ENCODE measurements at regions of chr12 and their contacts with region 1.

Region 1: DNA sequence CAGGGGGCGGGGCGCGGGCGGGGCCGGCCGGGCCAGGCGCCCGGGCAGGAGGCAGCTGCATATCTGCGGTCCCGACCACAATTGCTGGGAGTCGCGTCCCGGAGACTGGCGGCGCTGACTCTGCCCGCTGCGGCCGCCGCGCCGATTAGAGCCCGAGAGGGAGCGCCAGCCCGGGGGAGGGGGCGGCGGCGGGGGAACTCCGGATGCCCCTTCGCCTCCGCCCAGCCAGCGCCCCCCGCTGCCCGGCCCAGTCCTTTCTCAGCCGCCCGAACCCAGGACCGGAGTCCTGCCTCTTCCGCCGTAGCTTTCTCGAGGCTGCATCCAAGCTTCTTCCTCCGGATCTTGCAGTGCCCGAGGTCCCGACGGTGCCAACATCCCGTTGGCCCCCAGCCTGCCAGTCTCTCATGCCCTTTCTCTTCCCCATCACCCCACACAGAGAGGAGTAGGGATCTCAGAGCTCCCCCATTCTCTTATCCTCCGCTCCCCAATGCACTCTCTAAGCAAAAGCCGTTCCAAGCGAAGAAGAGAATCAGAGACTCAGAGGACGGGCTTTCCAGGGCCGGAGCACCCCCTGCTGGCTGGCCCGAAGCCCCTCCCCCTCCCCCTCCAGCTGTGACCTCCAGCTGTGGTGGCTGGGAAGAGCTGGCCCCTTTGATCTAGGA is 8.8 kb upstream of the SP7 start:
- DNase-seq: peak; percentile 66
- H3K4me3 Mint-ChIP-seq: peak overlapping the region; percentile 85
- H3K27ac Mint-ChIP-seq: peak overlapping the region; percentile 89
- H3K4me1 Mint-ChIP-seq: peaks cover 21% of the 10 kb centered on the region
- H3K27me3 Mint-ChIP-seq: peaks cover 8% of the 10 kb centered on the region

Region 2: GRCh38 chr12:53251477-53252348 is 93.2 kb before region 1 on chr12:
- CTCF ChIA-PET with region 1: no interaction called
- POLR2A ChIA-PET with region 1: no interaction called
- DNase-seq: peak; percentile 73
- H3K4me3 Mint-ChIP-seq: peak overlapping the region; percentile 99
- H3K27ac Mint-ChIP-seq: peak overlapping the region; percentile 94
- H3K4me1 Mint-ChIP-seq: peaks cover 47% of the 10 kb centered on the region
- H3K27me3 Mint-ChIP-seq: no peaks in the 10 kb centered on the region

Region 3: DNA sequence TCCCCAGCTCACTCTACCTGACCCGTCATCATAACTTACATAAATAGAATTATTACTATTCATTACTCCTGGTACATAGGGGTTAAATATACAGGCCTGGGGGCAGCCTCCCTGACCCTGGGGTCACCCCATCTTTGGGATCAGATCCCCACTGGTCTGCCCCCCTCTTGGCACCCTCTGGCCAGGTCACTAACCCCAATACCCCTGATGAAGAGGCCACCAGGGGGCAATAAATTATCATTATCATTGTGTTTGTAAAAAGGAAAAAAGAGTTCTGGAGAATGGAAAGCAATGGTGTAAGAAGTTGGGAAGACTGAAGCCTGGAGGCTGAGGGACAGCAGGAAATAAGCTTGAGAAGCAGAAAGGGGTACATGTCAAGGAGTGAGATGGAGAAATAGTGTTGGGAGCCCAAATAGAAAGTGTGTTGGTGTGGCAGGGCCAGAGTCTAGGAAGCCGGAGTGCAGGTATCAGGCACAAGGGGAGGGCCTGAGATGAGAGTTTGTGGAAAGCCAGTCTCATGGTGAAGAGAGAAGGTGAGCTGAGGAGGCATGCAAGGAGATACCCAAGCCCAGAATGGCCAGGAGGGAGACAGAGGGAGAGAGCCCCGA is 17.4 kb before region 1 on chr12:
- CTCF ChIA-PET with region 1: interaction called, 48 read pairs
- POLR2A ChIA-PET with region 1: no interaction called
- DNase-seq: no peak
- H3K4me3 Mint-ChIP-seq: no peak overlapping the region
- H3K27ac Mint-ChIP-seq: no peak overlapping the region
- H3K4me1 Mint-ChIP-seq: peaks cover 27% of the 10 kb centered on the region
- H3K27me3 Mint-ChIP-seq: peaks cover 24% of the 10 kb centered on the region

Region 4: DNA sequence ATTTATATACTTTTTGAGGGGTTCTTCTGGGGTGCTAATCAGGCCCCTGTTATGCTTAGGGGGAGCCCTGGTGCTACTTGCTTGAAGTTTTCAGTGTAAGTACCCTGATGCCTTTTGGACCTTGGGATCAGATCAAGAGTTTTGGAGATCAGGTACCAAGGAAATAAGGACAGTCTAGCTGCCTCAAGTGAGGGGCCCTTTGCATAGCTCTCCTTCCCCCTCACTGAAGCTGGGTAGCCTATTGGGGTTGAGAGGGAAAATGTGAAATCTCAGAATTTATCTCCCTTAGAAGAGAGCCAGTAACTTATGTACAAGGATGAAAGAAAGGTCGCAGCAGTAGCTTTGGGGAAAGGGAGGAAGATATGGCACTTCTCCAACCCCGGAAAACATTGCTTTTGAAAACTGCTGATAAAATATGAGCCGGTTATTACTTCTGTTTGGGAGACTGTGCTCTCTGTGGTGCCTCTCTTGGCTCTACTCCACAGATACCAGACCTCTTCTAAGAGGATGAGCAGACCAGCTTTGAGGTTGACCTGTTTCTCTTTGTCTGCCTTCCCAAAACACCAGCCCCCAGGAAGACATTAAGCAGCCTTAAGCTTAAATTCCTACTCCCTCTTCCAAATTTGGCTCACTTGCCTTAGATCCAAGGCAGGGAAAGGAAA is 69.9 kb after region 1 on chr12:
- CTCF ChIA-PET with region 1: interaction called, 17 read pairs
- POLR2A ChIA-PET with region 1: no interaction called
- DNase-seq: no peak
- H3K4me3 Mint-ChIP-seq: no peak overlapping the region
- H3K27ac Mint-ChIP-seq: no peak overlapping the region
- H3K4me1 Mint-ChIP-seq: peaks cover 48% of the 10 kb centered on the region
- H3K27me3 Mint-ChIP-seq: no peaks in the 10 kb centered on the region

Region 5: DNA sequence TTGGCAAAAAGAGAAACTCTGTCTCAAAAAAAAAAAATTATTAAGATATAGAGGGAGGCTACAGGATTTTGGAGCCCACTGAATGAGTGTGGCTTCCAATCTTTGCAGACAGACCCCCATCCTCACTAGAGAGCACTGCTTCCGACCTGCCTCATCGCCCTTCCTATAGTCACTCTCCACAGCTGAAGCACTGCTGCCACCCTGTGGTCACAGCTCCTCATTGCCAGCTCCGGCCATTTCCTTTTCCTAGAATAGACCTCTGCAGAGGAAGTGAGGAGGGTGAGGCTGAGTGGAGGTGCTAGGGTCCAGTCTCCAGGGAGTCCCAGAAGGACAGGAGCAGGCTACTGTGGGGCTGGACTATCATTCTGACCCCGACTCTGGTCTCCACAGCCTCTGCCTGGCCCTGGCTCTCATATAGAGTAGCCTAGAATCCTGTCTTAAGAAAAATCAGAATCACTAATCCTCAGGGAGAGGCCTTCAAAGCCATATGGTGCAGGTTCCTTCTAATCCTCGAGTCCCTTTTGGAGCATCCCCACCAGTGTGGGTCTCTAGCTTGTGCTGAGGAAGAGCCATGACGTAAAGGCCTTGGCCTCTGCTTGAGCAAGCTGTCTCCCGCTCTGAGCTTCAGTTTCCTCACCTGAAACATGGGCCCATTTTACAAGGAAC is 163.7 kb after region 1 on chr12:
- CTCF ChIA-PET with region 1: interaction called, 14 read pairs
- POLR2A ChIA-PET with region 1: no interaction called
- DNase-seq: peak; percentile 87
- H3K4me3 Mint-ChIP-seq: no peak overlapping the region
- H3K27ac Mint-ChIP-seq: peak overlapping the region; percentile 57
- H3K4me1 Mint-ChIP-seq: peaks cover 14% of the 10 kb centered on the region
- H3K27me3 Mint-ChIP-seq: no peaks in the 10 kb centered on the region

Measured in activated CD4-positive, alpha-beta T cell treated with anti-CD3 and anti-CD28 coated beads, Interleukin-2, amount 10 ng/mL, durations not matched to agents 7 days and 5 days (primary cell).